Naive thymus-derived CD4-positive, alpha-beta T cell (primary cell): ENCODE measurements at regions of chr2 and their contacts with region 1.

Region 1: DNA sequence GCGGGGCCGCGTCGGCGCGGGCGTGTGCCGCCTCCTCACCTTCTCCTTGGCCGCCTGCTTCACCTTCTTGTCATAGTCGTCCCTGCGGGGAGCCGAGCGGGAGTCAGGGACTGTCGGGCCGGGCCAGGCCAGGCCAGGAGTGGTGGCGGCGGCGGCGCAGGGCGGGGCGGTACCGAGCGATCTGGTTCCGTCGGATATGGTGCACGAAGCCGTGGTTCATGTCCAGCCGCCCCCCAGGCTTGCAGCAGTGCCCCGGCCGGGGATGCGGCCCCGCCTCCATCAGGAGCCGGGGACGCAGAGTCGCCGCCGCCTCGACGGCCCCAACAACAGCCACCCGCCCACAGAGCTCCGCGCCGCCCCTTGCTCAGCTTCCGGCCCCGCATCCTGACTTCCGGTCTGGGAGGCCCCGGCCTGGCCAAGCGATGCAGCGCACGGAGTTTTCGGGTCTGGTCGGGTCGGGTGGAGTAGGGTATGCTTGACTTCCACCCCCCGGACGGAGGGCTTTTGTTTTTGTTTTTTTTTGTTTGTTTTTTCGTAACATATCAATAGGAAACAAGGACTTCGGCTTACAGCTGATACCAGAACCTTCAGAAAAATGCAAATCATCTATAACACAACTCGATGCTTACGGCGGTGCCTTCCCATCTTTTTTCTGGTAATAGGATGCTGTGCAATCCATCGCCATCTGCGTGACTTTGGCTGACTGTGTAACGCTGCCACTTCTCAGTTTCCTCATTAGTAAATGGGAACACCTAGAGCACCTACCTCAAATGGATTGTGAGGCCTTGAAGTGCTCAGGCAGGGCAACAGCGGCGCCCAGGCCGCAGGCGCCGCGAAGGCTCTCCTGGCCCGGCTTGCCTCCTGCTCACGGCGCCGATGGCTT is at the start of gene C2orf68:
- DNase-seq: peak; percentile 61 to 92 (median 75)
- ATAC-seq: peak; percentile 76
- H3K4me3 ChIP-seq: peak within 1 kb of the TSS; percentile 65
- H3K4me3 Mint-ChIP-seq: peak within 1 kb of the TSS; percentile 96 to 100 (median 98)
- H3K27ac ChIP-seq: peak within 1 kb of the TSS; percentile 81
- H3K27ac Mint-ChIP-seq: peak within 1 kb of the TSS; percentile 86 to 99 (median 96)
- H3K4me1 ChIP-seq: peaks cover 11 to 16% of the 10 kb centered on the region in 2 donors
- H3K4me1 Mint-ChIP-seq: peaks cover 14 to 52% (median 44%) of the 10 kb centered on the region in 7 donors
- H3K27me3 ChIP-seq: no peaks in the 10 kb centered on the region
- H3K27me3 Mint-ChIP-seq: no peaks in the 10 kb centered on the region
- total RNA-seq, gene C2orf68: 40.9 to 92.1 (median 51.6) TPM

Region 2: GRCh38 chr2:85390941-85391669 is 220.8 kb before region 1 on chr2:
- CTCF ChIA-PET with region 1: no interaction called
- POLR2A ChIA-PET with region 1: no interaction called
- intact Hi-C with region 1: loop called in 1 of 2 experiments (anchors 1 kb)
- DNase-seq: peak; percentile 52 to 79 (median 71)
- ATAC-seq: peak; percentile 76
- H3K4me3 ChIP-seq: no peak overlapping the region
- H3K4me3 Mint-ChIP-seq: no peak overlapping the region
- H3K27ac ChIP-seq: no peak overlapping the region
- H3K27ac Mint-ChIP-seq: peak overlapping the region in 5 of 9 donors; percentile 9 to 65 (median 38)
- H3K4me1 ChIP-seq: peaks cover 0 to 11% of the 10 kb centered on the region in 2 donors
- H3K4me1 Mint-ChIP-seq: peaks cover 5 to 27% (median 15%) of the 10 kb centered on the region in 7 donors
- H3K27me3 ChIP-seq: no peaks in the 10 kb centered on the region
- H3K27me3 Mint-ChIP-seq: no peaks in the 10 kb centered on the region

Region 3: DNA sequence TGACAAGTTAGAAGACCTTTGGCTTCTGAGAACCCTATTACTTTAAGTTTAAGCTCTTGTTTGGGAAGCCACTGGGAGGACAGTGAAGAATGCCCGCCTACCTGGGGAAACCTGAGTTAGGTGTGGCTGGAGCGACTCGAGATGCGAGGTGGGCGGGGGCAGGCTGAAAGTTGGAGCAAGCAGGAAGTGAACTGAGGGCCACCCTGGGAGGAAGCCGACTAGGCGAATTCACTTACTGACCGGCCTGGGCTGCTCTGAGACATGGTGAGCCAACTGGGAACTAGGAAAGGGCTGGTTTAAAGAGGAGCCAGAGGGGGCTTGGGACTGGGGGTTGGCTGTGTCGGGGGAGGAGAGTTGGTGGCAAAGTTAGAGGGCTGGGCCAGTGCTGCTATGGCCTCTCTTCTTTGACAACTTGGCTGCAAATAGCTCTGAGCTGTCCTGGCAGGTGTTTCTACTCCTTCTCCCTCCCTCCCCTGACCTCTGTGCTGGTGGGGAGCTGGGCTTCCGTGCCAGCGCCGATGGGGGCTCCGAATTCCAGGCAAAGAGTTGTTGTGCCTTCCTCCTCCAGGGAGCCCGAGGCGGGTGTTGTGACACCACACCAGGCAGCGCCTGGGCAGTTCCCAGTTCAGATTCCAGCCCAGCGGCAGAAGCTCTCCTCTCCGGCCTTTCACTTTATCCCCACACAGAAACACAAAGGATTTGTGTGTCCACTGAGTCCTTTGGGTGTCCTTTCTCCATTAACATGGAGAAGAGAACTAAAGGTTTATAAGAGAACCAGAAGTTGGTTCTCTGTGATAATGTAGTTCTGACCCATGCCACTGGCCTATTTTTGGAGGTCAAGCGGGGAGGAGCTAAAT is 34.3 kb before region 1 on chr2 and contains the start of gene VAMP8:
- CTCF ChIA-PET with region 1: no interaction called
- POLR2A ChIA-PET with region 1: interaction called, 3 read pairs
- intact Hi-C with region 1: loop called in 1 of 2 experiments (anchors 5 kb)
- DNase-seq: peak in 8 of 9 donors; percentile 43 to 61 (median 46)
- ATAC-seq: peak; percentile 82
- H3K4me3 ChIP-seq: peak within 1 kb of the TSS; percentile 78
- H3K4me3 Mint-ChIP-seq: peak within 1 kb of the TSS; percentile 89 to 96 (median 92)
- H3K27ac ChIP-seq: peak within 1 kb of the TSS; percentile 86
- H3K27ac Mint-ChIP-seq: peak within 1 kb of the TSS; percentile 74 to 99 (median 94)
- H3K4me1 ChIP-seq: peaks cover 12 to 28% of the 10 kb centered on the region in 2 donors
- H3K4me1 Mint-ChIP-seq: peaks cover 28 to 47% (median 39%) of the 10 kb centered on the region in 7 donors
- H3K27me3 ChIP-seq: no peaks in the 10 kb centered on the region
- H3K27me3 Mint-ChIP-seq: peaks cover 0 to 2% (median 0%) of the 10 kb centered on the region in 5 donors
- total RNA-seq, gene VAMP8: 55.1 to 137 (median 83.2) TPM

Region 4: GRCh38 chr2:85584857-85585783 is 26.8 kb before region 1 on chr2:
- CTCF ChIA-PET with region 1: interaction called, 3 read pairs
- POLR2A ChIA-PET with region 1: interaction called, 6 read pairs
- intact Hi-C with region 1: loop called in 1 of 2 experiments (anchors 1 kb)
- DNase-seq: peak in 4 of 9 donors; percentile 22 to 40 (median 30)
- ATAC-seq: peak; percentile 47
- H3K4me3 ChIP-seq: peak overlapping the region; percentile 69
- H3K4me3 Mint-ChIP-seq: peak overlapping the region; percentile 79 to 96 (median 88)
- H3K27ac ChIP-seq: peak overlapping the region; percentile 80
- H3K27ac Mint-ChIP-seq: peak overlapping the region; percentile 81 to 93 (median 93)
- H3K4me1 ChIP-seq: peaks cover 19 to 35% of the 10 kb centered on the region in 2 donors
- H3K4me1 Mint-ChIP-seq: peaks cover 47 to 73% (median 65%) of the 10 kb centered on the region in 7 donors
- H3K27me3 ChIP-seq: no peaks in the 10 kb centered on the region
- H3K27me3 Mint-ChIP-seq: no peaks in the 10 kb centered on the region

Region 5: DNA sequence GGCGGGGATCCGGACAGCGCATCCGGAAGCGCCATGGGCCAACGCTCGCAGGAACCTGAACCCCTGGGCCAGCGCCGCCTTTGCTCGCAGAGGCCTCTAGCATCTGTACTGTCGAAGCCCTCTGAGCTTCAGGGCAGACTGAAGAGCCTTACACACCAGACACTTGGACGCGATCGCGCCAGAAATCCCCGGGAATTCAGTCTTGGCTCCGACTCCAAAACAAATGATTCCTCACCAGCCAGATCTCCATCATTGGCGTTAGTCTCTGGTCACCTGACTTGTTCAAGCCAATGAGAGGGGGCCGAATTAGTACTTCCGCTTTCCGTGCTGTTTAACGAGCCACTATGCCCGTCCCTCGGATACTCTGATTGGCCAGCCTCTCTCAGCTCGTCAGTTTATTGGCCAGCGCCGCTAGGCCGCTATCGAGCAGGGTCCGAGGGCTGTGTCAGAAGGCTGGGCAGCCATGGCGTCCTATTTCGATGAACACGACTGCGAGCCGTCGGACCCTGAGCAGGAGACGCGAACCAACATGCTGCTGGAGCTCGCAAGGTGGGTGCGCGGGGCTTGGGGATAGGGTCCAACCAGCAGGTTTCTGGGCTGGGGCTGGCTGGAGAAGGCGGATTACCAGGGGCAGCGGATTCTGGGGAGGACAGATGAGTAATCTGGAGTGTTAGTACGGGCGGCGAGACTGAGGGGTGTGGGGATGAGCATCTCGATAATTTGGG is 16.5 kb before region 1 on chr2 and contains the start of gene RNF181:
- CTCF ChIA-PET with region 1: interaction called, 5 read pairs
- POLR2A ChIA-PET with region 1: interaction called, 30 read pairs
- intact Hi-C with region 1: loop called (anchors 1 kb)
- DNase-seq: peak; percentile 65 to 95 (median 90)
- ATAC-seq: peak; percentile 99
- H3K4me3 ChIP-seq: peak within 1 kb of the TSS; percentile 89
- H3K4me3 Mint-ChIP-seq: peak within 1 kb of the TSS; percentile 93 to 100 (median 98)
- H3K27ac ChIP-seq: peak within 1 kb of the TSS; percentile 88
- H3K27ac Mint-ChIP-seq: peak within 1 kb of the TSS; percentile 93 to 99 (median 97)
- H3K4me1 ChIP-seq: peaks cover 15 to 16% of the 10 kb centered on the region in 2 donors
- H3K4me1 Mint-ChIP-seq: peaks cover 25 to 48% (median 35%) of the 10 kb centered on the region in 7 donors
- H3K27me3 ChIP-seq: no peaks in the 10 kb centered on the region
- H3K27me3 Mint-ChIP-seq: no peaks in the 10 kb centered on the region
- total RNA-seq, gene RNF181: 38.5 to 118 (median 61.4) TPM

Region 6: GRCh38 chr2:86195055-86195807 is 583.3 kb after region 1 on chr2 and contains the start of gene IMMT:
- CTCF ChIA-PET with region 1: no interaction called
- POLR2A ChIA-PET with region 1: no interaction called
- intact Hi-C with region 1: loop called in 1 of 2 experiments (anchors 10 kb)
- DNase-seq: peak; percentile 86 to 96 (median 94)
- ATAC-seq: peak; percentile 94
- H3K4me3 ChIP-seq: peak within 1 kb of the TSS; percentile 74
- H3K4me3 Mint-ChIP-seq: peak within 1 kb of the TSS; percentile 86 to 99 (median 95)
- H3K27ac ChIP-seq: peak within 1 kb of the TSS; percentile 97
- H3K27ac Mint-ChIP-seq: peak within 1 kb of the TSS; percentile 82 to 97 (median 90)
- H3K4me1 ChIP-seq: peaks cover 15 to 23% of the 10 kb centered on the region in 2 donors
- H3K4me1 Mint-ChIP-seq: peaks cover 35 to 74% (median 60%) of the 10 kb centered on the region in 7 donors
- H3K27me3 ChIP-seq: no peaks in the 10 kb centered on the region
- H3K27me3 Mint-ChIP-seq: no peaks in the 10 kb centered on the region
- total RNA-seq, gene IMMT: 59.2 to 164 (median 77.0) TPM

Region 7: GRCh38 chr2:86272111-86272510 is 660.2 kb after region 1 on chr2:
- CTCF ChIA-PET with region 1: no interaction called
- POLR2A ChIA-PET with region 1: no interaction called
- intact Hi-C with region 1: no loop called
- DNase-seq: no peak
- ATAC-seq: no peak
- H3K4me3 ChIP-seq: no peak overlapping the region
- H3K4me3 Mint-ChIP-seq: no peak overlapping the region
- H3K27ac ChIP-seq: no peak overlapping the region
- H3K27ac Mint-ChIP-seq: no peak overlapping the region
- H3K4me1 ChIP-seq: no peaks in the 10 kb centered on the region
- H3K4me1 Mint-ChIP-seq: peaks cover 0 to 13% (median 0%) of the 10 kb centered on the region in 7 donors
- H3K27me3 ChIP-seq: no peaks in the 10 kb centered on the region
- H3K27me3 Mint-ChIP-seq: peaks cover 0 to 19% (median 5%) of the 10 kb centered on the region in 5 donors